Calu3 (cell line): ENCODE measurements at regions of chr1 and their contacts with region 1.

Region 1: DNA sequence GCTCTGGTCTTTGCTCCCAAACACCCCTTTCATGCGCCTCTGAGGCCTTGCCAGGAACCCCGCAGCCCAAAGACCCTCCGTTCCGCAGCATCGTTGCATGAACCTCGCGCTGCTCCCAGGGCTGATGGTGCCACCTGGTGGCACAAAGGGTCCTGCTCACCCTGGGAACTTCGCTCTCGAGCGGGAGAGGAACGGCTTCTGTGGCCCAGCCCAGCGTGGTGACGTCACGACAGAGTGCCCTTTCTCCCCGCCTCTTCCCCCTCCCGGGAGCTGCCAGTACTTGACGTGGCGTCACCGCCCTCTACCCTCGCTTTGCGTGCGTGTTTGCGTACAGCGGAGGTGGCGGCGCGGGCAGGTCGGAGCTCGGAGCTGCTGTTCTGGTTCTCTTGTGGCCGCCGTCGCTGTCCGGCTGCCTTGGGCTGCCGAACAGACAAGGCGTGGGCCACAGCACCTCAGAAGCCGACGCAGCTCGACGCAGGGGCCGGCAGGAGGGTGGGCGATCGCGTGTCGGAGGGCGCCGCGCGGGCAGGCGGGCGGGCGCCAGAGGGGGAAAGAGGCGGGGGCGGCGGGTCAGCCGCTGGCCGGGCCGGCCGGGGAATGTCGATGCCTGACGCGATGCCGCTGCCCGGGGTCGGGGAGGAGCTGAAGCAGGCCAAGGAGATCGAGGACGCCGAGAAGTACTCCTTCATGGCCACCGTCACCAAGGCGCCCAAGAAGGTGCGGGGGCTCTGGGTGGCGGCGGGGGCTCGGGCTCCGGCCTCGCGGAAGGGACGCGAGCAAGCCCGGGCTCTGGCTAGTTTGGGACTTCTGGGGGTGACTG is at the start of gene AHCYL1:
- DNase-seq: peak; percentile 97
- H3K4me3 Mint-ChIP-seq: peak within 1 kb of the TSS; percentile 88
- H3K27ac Mint-ChIP-seq: peak within 1 kb of the TSS; percentile 75
- H3K4me1 Mint-ChIP-seq: peaks cover 28% of the 10 kb centered on the region
- H3K27me3 Mint-ChIP-seq: no peaks in the 10 kb centered on the region
- CTCF ChIP-seq: peak; percentile 83
- total RNA-seq, gene AHCYL1: 54.2 and 56.5 TPM in 2 replicates

Region 2: GRCh38 chr1:109548321-109549267 is 436.1 kb before region 1 on chr1 and contains the start of gene GNAI3:
- CTCF ChIA-PET with region 1: interaction called, 5 read pairs
- intact Hi-C with region 1: loop called (anchors 5 kb)
- DNase-seq: peak; percentile 87
- H3K4me3 Mint-ChIP-seq: peak within 1 kb of the TSS; percentile 91
- H3K27ac Mint-ChIP-seq: peak within 1 kb of the TSS; percentile 97
- H3K4me1 Mint-ChIP-seq: no peaks in the 10 kb centered on the region
- H3K27me3 Mint-ChIP-seq: peaks cover 14% of the 10 kb centered on the region
- CTCF ChIP-seq: no peak
- total RNA-seq, gene GNAI3: 6.3 and 6.5 TPM in 2 replicates

Region 3: DNA sequence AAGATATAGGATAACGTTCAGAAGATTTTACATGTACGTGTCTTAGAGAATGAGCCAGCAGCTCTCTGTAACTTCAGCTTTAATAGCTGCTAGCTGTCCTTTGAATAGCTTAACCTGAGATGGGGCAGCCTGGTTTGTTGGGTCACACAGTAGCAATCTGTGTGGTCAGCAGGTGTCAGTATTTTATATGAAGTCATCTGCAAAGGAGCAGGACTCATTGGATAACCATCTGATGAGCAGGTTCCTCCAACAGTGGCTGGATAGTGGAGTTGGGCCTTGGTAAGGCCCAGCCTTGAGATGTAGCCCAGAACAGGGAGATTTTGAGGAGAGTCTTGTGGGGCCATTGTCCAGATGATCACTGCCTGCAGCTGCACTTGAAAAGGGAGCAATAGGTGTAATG is 266.2 kb before region 1 on chr1:
- CTCF ChIA-PET with region 1: interaction called, 13 read pairs
- intact Hi-C with region 1: loop called (anchors 5 kb)
- DNase-seq: peak; percentile 17
- H3K4me3 Mint-ChIP-seq: no peak overlapping the region
- H3K27ac Mint-ChIP-seq: no peak overlapping the region
- H3K4me1 Mint-ChIP-seq: no peaks in the 10 kb centered on the region
- H3K27me3 Mint-ChIP-seq: peaks cover 10% of the 10 kb centered on the region
- CTCF ChIP-seq: no peak

Region 4: GRCh38 chr1:109783429-109783831 is 201.2 kb before region 1 on chr1:
- CTCF ChIA-PET with region 1: interaction called, 101 read pairs
- intact Hi-C with region 1: loop called (anchors 2 kb)
- DNase-seq: peak; percentile 62
- H3K4me3 Mint-ChIP-seq: no peak overlapping the region
- H3K27ac Mint-ChIP-seq: peak overlapping the region; percentile 50
- H3K4me1 Mint-ChIP-seq: peaks cover 41% of the 10 kb centered on the region
- H3K27me3 Mint-ChIP-seq: no peaks in the 10 kb centered on the region
- CTCF ChIP-seq: no peak

Region 5: DNA sequence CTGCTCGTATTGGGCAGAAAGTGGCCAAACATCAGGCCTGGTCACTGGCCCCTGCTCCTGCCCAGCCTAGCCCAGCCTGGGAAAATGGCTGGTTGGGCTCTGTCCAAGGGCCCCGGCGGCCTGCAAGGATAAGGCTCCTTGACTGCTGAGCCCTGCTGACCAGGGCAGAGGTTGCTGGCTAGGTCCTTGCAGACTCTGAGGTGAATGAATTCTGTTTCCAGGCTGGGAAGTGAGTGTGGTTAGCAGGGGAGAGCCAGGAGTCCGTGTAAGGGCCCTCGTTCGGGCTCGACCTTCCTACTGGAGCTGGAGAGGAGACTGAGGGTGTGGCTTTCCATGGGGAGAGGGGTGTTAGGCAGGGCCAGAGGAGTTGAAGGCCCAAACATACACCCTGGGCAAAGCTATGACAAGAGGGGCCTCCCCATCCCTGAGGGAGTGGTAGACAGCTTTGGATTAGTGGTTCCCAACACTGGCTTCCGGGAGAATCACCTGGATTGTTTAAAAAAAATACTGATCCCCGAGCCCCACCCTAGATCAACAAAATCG is 53.4 kb before region 1 on chr1:
- CTCF ChIA-PET with region 1: interaction called, 3 read pairs
- intact Hi-C with region 1: loop called (anchors 5 kb)
- DNase-seq: peak; percentile 83
- H3K4me3 Mint-ChIP-seq: peak overlapping the region; percentile 36
- H3K27ac Mint-ChIP-seq: peak overlapping the region; percentile 79
- H3K4me1 Mint-ChIP-seq: peaks cover 46% of the 10 kb centered on the region
- H3K27me3 Mint-ChIP-seq: no peaks in the 10 kb centered on the region
- CTCF ChIP-seq: no peak

Region 6: GRCh38 chr1:110011527-110012041 is 26.9 kb after region 1 on chr1:
- CTCF ChIA-PET with region 1: interaction called, 19 read pairs
- intact Hi-C with region 1: loop called (anchors 2 kb)
- DNase-seq: peak; percentile 34
- H3K4me3 Mint-ChIP-seq: no peak overlapping the region
- H3K27ac Mint-ChIP-seq: no peak overlapping the region
- H3K4me1 Mint-ChIP-seq: peaks cover 9% of the 10 kb centered on the region
- H3K27me3 Mint-ChIP-seq: no peaks in the 10 kb centered on the region
- CTCF ChIP-seq: peak; percentile 46